ENCODE measurements at regions of chr5 and their contacts with region 1.

Region 1: DNA sequence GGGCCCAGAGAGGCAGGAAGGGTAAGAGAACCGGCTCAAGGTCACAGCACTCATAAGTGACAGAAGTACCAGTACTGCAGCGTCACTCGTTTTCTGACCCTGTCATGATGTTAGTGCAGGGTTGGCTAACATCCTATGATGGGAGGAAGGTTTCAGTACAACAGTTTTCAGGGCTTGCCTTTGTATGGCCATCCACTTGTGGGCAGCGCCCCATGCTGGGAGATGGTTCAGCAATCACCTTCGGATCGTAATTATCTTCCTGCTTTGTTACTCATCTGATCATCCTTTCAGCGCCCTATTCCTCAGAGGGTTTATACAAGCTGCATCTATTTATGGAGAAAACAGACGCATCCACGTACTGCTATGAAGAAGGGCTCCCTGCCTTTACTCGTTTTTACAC is 2.4 kb downstream of the MAP1B start:
- DNase-seq: no peak
- H3K4me3 ChIP-seq: no peak overlapping the region
- H3K27ac ChIP-seq: no peak overlapping the region
- H3K4me1 ChIP-seq: peaks cover 4% of the 10 kb centered on the region
- H3K27me3 ChIP-seq: no peaks in the 10 kb centered on the region
- CTCF ChIP-seq: no peak
- EP300 ChIP-seq: no peak
- POLR2A ChIP-seq: no peak

Region 2: DNA sequence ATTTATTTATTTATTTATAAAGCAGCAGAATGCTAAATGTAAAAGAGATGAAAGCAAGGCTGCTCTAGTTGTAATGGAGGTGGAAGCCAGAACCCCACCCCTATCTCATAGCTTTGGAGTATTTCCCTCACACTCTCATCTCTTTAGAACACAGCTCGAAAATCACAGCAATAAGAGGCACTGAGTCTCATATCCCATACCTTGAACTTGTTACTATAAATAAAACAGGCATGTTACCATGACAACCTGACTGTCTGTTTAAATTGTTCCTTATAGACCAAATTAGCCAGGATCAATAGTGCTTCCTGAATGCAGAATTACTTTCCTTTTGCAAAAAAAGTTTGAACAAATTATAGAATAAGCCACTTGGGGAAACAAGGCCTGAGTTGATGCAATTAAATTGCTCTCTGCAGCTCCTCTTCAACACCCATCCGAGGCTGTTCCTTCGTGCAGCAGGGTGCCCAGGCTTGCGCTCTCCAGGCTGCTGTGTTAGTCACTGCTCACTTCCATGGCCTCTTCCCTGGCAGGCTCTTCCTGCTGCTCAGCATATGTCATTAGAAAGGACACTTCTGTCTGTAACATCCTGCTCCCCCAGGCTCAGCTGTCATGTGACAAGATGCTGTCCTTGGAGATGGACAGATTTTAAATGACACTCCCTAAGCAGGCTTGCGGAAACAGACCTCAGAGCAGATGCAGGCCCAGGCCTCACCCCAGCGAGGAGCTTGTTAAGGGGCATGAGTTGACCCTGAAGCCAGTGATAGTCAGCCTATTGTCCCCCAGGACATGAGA is 270.3 kb before region 1 on chr5:
- intact Hi-C with region 1: no loop called
- DNase-seq: no peak
- H3K4me3 ChIP-seq: no peak overlapping the region
- H3K27ac ChIP-seq: no peak overlapping the region
- H3K4me1 ChIP-seq: no peaks in the 10 kb centered on the region
- H3K27me3 ChIP-seq: no peaks in the 10 kb centered on the region
- CTCF ChIP-seq: no peak
- EP300 ChIP-seq: no peak
- POLR2A ChIP-seq: no peak

Region 3: DNA sequence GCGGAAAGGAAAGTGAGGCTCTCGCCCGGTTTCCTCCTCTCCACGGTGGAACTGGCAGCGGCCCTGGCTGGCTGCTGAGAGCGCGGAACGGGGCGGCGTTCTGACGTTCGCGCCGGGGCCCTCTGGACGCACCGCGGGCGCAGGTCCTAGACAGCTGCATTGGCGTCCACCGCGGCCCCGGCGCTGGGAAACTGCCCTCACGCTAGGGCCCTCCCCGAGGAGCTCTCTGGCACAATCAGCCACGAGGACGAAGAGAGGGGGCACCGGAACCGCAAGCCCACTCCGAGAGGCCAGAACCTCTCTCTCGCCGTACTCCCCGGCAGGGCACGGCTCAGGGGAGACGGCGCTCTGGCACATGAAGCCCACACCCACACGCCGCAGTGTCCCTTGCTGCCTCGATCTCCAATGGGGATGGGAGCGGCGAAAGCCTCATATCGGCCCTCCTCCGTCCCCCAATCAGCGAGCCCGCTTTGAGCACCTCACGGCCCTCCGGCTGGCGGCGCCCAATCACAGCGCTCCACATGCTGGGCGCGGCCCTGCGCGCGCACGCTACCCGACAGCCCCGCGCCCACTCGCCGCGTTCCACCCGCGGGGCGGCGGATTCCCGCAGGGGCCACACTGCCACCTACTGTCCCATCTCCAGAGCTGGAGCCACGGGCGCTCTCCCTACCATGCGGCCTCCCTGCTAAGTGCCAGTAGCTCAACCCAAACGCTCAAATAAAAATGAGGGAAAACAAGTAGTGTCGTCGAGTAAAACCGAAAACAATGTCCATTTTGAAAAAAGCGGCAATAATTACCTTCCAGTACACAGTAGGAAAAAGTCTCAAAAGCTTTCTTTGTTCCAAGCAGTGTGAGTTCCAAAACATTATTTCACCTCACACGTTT is 198.6 kb after region 1 on chr5:
- intact Hi-C with region 1: loop called in 1 of 4 experiments (anchors 10 kb)
- DNase-seq: peak; percentile 96 to 98 (median 97)
- H3K4me3 ChIP-seq: peak overlapping the region; percentile 80
- H3K27ac ChIP-seq: peak overlapping the region; percentile 85 to 96
- H3K4me1 ChIP-seq: no peaks in the 10 kb centered on the region
- H3K27me3 ChIP-seq: no peaks in the 10 kb centered on the region
- CTCF ChIP-seq: peak; percentile 88 to 98 (median 95)
- EP300 ChIP-seq: peak; percentile 23
- POLR2A ChIP-seq: peak; percentile 90

Measured in ovary (tissue), 10 donors.